OCI-LY7 (cell line): ENCODE measurements at regions of chr12 and their contacts with region 1.

Region 1: DNA sequence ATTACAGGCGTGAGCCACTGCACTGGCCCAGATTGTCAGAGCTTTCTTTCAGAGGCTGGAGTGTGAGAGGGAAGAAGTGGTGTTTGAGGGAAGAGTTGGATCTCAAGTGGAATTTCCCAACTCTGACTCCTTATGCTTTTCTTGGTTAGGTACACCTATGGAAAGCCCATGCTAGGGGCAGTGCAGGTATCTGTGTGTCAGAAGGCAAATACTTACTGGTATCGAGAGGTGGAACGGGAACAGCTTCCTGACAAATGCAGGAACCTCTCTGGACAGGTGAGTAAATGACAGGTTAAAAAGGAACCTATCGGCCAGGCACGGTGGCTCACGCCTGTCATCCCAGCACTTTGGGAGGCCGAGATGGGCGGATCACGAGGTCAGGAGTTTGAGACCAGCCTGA is 14.9 kb downstream of the A2ML1 start:
- DNase-seq: no peak
- H3K4me3 ChIP-seq: no peak overlapping the region
- H3K27ac ChIP-seq: no peak overlapping the region
- H3K4me1 ChIP-seq: no peaks in the 10 kb centered on the region
- CTCF ChIP-seq: no peak

Region 2: GRCh38 chr12:8527250-8528130 is 309.8 kb before region 1 on chr12:
- CTCF ChIA-PET with region 1: no interaction called
- POLR2A ChIA-PET with region 1: interaction called, 10 read pairs
- intact Hi-C with region 1: no loop called
- DNase-seq: no peak
- H3K4me3 ChIP-seq: no peak overlapping the region
- H3K27ac ChIP-seq: no peak overlapping the region
- H3K4me1 ChIP-seq: peaks cover 4% of the 10 kb centered on the region
- CTCF ChIP-seq: no peak

Region 3: GRCh38 chr12:9118158-9118557 is 280.9 kb after region 1 on chr12:
- CTCF ChIA-PET with region 1: no interaction called
- POLR2A ChIA-PET with region 1: no interaction called
- intact Hi-C with region 1: no loop called
- DNase-seq: no peak
- H3K4me3 ChIP-seq: no peak overlapping the region
- H3K27ac ChIP-seq: no peak overlapping the region
- H3K4me1 ChIP-seq: no peaks in the 10 kb centered on the region
- CTCF ChIP-seq: no peak